Esophagus muscularis mucosa (tissue), 4 donors: ENCODE measurements at regions of chr11 and their contacts with region 1.

Region 1: DNA sequence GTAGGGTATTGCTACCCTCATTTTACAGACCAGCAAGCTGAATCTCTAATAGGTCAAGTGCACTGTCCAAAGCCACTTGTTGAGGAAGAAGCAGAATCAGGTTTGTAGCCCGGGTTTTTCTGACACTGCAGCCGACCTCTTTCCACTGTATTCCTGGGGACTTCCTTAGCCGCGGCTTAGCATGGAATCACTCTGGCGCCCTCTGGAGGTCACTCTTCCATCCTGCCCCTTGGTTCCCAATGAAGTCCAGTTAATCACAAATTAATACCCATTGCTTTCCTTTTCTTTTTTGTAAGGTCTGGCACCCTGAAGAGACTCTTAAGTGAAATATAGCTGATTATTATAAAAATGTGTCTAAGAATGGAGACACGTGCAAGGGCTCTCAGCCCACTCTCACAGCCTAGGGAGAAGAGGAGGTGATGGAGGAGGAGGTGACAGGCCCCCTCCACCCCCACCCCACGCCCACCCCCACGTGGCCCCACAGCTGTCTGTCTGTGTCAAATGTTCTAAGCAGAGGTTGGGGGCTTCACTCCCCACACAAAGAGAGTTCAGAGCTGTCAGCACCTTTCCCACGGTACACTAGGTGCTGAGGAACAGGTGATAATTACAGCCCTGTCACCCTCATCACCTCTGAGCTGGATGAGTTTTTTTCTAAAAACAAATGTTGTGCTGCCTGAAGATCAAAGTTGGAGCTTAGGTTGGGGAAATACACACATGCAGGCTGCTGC is 57.7 kb upstream of the DRD2 start:
- DNase-seq: no peak
- H3K4me3 ChIP-seq: no peak overlapping the region
- H3K27ac ChIP-seq: no peak overlapping the region
- H3K4me1 ChIP-seq: peaks cover 0 to 6% (median 0%) of the 10 kb centered on the region in 4 donors
- H3K27me3 ChIP-seq: peaks cover 0 to 15% (median 0%) of the 10 kb centered on the region in 4 donors
- CTCF ChIP-seq: peak; percentile 67 to 86 (median 75)
- EP300 ChIP-seq: no peak
- POLR2A ChIP-seq: no peak

Region 2: DNA sequence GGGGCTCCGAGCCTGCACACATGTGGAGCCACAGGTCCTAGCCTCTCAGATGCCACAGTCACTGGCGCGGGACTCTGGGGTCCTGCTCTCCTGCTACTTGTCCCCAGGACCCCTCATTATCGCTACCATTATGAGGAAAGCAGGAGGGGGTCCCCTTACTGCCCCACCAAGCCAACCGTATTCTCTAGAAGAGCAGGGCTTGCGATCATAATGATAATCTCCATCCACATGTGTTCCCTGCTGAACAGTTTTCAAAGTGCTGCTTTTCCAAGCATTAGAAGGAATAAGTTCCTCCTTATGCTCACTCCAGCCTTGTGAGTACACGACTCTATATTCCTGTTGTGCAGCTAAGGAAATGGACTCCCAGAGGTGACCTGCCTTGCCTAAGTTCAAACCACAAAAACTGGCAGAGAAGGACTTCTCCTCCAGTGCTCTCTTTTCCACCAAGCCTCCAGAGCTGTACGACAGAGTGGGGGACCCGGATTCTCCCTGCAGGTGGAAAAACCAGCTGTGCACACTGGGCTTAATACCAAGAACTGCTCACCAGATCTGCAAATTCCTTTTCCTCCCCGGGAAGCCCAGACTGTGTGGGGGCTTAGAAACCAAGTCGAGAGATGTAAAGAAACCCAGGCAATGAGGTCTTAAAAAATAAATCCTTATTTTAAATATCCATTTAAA is 35.1 kb after region 1 on chr11:
- intact Hi-C with region 1: no loop called
- DNase-seq: no peak
- H3K4me3 ChIP-seq: no peak overlapping the region
- H3K27ac ChIP-seq: no peak overlapping the region
- H3K4me1 ChIP-seq: no peaks in the 10 kb centered on the region
- H3K27me3 ChIP-seq: no peaks in the 10 kb centered on the region
- CTCF ChIP-seq: no peak
- EP300 ChIP-seq: no peak
- POLR2A ChIP-seq: no peak

Region 3: DNA sequence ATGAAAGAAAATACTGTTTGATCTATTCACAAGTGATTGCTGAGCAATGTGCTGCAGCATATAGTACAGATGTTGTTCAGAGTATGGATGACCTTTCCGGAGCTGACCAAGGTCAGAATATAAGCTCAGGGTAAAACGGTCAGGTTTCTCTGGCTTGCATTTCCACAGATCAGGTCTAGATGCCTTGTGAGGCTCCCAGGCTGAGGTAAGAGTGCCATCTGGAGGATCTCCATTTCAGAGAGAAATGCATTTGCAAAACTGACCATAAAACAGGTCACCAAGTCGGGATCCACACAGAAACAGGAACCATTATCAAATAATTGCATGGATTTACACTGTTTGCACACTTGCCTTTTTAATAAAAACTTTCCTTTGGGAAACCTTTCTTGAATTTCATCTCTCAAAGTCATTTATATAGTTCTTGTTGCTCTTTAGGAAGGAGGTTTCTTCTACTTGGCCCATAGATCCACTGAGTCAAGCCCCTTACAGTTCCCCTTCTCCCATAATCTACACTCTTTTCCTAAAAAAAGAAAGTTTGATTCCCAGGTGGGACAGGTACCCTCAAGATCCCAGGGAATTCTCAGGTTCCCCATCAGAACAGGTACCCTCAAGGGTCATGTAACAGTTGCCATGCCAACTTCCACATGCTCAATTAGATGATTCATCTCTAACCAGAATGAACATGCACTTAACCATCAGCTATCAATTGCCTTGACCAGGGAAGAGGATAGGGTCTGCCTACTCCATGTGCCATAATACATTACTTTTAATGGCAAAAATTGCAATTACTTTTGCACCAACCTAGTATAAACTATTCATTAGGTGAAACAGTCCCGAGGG is 198.2 kb after region 1 on chr11:
- intact Hi-C with region 1: loop called (anchors 10 kb)
- DNase-seq: no peak
- H3K4me3 ChIP-seq: no peak overlapping the region
- H3K27ac ChIP-seq: no peak overlapping the region
- H3K4me1 ChIP-seq: peaks cover 0 to 9% (median 0%) of the 10 kb centered on the region in 4 donors
- H3K27me3 ChIP-seq: no peaks in the 10 kb centered on the region
- CTCF ChIP-seq: peak; percentile 60 to 65 (median 60)
- EP300 ChIP-seq: no peak
- POLR2A ChIP-seq: no peak

Region 4: GRCh38 chr11:114606003-114606801 is 1073.3 kb after region 1 on chr11:
- intact Hi-C with region 1: no loop called
- DNase-seq: peak; percentile 66
- H3K4me3 ChIP-seq: no peak overlapping the region
- H3K27ac ChIP-seq: no peak overlapping the region
- H3K4me1 ChIP-seq: no peaks in the 10 kb centered on the region
- H3K27me3 ChIP-seq: no peaks in the 10 kb centered on the region
- CTCF ChIP-seq: no peak
- EP300 ChIP-seq: no peak
- POLR2A ChIP-seq: no peak